Dorsolateral prefrontal cortex (tissue), 120 donors: ENCODE measurements at regions of chr12 and their contacts with region 1.

Region 1: GRCh38 chr12:72282721-72283120 is 10.6 kb downstream of the TRHDE start:
- DNase-seq: no peak
- H3K4me3 ChIP-seq: no peak overlapping the region
- H3K27ac ChIP-seq: no peak overlapping the region
- H3K27me3 ChIP-seq: peaks cover 0 to 11% (median 0%) of the 10 kb centered on the region in 45 donors
- CTCF ChIP-seq: peak in 55 of 56 donors; percentile 24 to 75 (median 56)

Region 2: DNA sequence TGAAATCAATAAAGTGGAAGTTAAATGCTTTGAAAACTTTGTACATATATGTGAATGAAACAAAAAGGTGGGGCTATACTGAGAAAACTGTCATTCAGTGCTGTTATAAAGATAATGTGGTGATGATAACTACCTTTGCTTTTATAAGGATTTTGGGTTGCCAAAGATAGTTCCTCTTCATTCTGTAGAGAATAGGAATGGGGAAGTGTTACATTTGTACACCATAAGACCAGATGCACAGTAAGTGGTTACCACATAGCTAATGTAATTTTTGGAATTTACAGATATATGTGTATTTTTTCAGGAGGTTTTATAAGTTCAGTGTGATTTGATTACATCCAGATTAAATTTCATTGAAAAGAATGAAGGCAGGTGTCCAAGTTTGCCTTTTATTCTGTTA is 510.0 kb before region 1 on chr12:
- intact Hi-C with region 1: loop called in 1 of 2 experiments (anchors 10 kb)
- DNase-seq: no peak
- H3K4me3 ChIP-seq: no peak overlapping the region
- H3K27ac ChIP-seq: peak overlapping the region in 9 of 59 donors; percentile 2 to 32 (median 17)
- H3K27me3 ChIP-seq: no peaks in the 10 kb centered on the region
- CTCF ChIP-seq: no peak

Region 3: DNA sequence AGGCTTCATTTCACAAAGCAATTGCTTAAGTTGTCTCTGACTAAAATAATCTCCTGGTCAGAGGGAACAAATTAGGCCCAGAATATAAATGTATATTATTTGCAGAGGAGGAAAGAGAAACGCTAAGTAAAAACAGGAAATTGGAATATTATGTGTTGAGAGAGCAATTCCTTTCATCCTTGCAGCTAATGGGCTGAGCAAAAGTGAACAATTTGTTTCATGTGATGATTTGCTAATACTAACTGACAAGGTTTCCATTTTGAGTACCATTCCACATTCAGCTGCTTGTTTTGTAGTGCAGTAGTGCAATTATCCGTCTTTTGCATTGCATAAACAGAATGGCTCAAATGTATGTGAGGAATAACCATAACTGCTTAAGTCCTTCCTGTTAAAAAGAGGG is 240.9 kb before region 1 on chr12:
- intact Hi-C with region 1: no loop called
- DNase-seq: no peak
- H3K4me3 ChIP-seq: no peak overlapping the region
- H3K27ac ChIP-seq: peak overlapping the region in 13 of 59 donors; percentile 1 to 70 (median 26)
- H3K27me3 ChIP-seq: no peaks in the 10 kb centered on the region
- CTCF ChIP-seq: no peak